Sciatic nerve (tissue), 2 donors: ENCODE measurements at regions of chr16 and their contacts with region 1.

Region 1: GRCh38 chr16:50093607-50094539 is 28.1 kb downstream of the HEATR3 start:
- DNase-seq: peak; percentile 72
- ATAC-seq: peak; percentile 96

Region 2: DNA sequence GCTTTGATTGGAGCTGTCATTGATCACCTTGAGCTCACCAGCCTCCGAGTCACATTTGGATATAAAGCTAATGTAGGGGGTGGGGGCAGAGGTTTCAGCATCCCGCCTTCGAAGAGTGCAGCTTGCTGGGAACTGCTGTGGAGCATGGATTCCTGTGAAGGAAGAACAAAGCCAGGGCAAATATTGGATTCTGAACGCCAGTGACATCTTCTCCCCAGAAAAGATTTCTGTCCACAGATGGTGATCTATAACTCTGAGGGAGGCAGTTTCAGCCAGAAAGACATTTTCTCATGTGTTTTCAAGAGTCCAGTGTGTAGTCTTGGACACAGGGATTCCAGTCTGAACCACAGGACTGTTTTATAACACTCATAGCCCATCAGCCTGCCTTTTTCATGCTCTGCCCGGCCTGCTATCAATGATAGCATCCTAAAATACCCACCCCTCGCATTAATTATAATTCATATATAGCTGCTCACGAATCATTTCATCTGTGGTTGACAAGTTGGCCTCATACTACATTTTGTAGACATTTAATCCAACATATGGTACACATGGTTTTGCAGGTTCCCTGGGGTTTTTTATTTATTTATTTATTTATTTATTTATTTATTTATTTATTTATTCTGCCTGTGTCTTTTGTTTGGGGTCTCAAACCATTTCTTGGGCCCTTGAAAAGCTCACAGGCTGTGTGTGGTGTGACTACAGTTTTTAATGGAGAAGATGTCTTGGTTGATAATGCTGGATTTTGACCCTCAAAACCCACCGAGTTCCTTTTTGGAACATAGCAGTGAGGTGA is 1104.3 kb after region 1 on chr16:
- intact Hi-C with region 1: loop called (anchors 5 kb)
- DNase-seq: no peak
- ATAC-seq: no peak